ENCODE measurements at regions of chrX and their contacts with region 1.

Region 1: GRCh38 chrX:49058794-49059193 is at the start of gene CCDC120:
- DNase-seq: no peak
- H3K4me3 ChIP-seq: peak within 1 kb of the TSS; percentile 57; the same call in 1 of the 2 replicates
- H3K27ac ChIP-seq: peak within 1 kb of the TSS; percentile 47; the same call in 1 of the 2 replicates
- H3K4me1 ChIP-seq: no peaks in the 10 kb centered on the region
- H3K27me3 ChIP-seq: no peaks in the 10 kb centered on the region
- CTCF ChIP-seq: no peak
- total RNA-seq, gene CCDC120: 20.6 and 23.9 TPM in 2 replicates

Region 2: GRCh38 chrX:48737213-48737938 is 321.4 kb before region 1 on chrX:
- CTCF ChIA-PET with region 1: no interaction called
- POLR2A ChIA-PET with region 1: no interaction called
- intact Hi-C with region 1: no loop called
- DNase-seq: peak; percentile 81 to 88
- H3K4me3 ChIP-seq: peak overlapping the region; percentile 58; the same call in 1 of the 2 replicates
- H3K27ac ChIP-seq: peak overlapping the region; percentile 81
- H3K4me1 ChIP-seq: no peaks in the 10 kb centered on the region
- H3K27me3 ChIP-seq: no peaks in the 10 kb centered on the region
- CTCF ChIP-seq: no peak

Region 3: DNA sequence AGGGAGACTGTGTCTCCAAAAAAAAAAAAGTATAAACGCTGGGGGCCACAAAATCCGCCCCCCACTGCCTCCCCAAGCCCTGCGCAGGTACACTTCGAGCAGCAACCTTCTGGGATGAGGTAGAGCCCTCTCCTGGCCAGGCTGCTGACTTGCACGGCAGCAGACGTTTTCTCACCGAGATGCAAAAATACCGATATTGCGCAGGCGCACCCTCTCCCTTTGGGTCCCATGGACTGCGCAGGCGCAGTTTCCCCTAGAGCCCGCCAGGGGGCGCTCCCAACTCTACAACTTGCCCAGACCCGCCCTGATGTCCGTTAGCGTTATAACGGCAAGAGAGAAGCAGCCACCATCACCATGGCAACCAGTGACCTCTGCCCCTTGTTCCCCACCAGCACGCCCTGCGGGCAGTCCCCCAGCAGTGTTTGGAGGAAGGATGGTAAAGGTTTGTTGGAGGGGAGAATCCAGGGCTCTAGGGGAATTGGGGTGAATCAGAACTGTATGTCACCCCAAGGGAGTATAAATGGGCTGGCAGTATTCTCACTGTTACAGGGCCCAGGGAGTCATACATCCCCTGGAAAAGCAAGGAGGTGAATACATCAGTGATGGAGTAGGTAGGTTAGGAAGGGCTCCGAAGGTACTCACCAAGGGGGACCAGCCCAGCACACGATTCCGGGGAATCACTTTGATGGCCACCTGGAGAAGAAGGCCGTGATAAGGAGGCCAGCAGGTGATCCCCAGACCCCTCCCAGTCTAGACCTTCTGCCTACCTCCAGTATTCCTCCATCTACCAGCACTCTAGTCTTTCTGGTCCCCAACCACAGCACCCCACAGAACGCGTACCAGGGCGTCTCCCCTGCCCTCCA is 141.4 kb before region 1 on chrX:
- CTCF ChIA-PET with region 1: no interaction called
- POLR2A ChIA-PET with region 1: no interaction called
- intact Hi-C with region 1: loop called (anchors 5 kb)
- DNase-seq: peak; percentile 70 to 75
- H3K4me3 ChIP-seq: no peak overlapping the region
- H3K27ac ChIP-seq: no peak overlapping the region
- H3K4me1 ChIP-seq: no peaks in the 10 kb centered on the region
- H3K27me3 ChIP-seq: no peaks in the 10 kb centered on the region
- CTCF ChIP-seq: peak; percentile 80

Region 4: DNA sequence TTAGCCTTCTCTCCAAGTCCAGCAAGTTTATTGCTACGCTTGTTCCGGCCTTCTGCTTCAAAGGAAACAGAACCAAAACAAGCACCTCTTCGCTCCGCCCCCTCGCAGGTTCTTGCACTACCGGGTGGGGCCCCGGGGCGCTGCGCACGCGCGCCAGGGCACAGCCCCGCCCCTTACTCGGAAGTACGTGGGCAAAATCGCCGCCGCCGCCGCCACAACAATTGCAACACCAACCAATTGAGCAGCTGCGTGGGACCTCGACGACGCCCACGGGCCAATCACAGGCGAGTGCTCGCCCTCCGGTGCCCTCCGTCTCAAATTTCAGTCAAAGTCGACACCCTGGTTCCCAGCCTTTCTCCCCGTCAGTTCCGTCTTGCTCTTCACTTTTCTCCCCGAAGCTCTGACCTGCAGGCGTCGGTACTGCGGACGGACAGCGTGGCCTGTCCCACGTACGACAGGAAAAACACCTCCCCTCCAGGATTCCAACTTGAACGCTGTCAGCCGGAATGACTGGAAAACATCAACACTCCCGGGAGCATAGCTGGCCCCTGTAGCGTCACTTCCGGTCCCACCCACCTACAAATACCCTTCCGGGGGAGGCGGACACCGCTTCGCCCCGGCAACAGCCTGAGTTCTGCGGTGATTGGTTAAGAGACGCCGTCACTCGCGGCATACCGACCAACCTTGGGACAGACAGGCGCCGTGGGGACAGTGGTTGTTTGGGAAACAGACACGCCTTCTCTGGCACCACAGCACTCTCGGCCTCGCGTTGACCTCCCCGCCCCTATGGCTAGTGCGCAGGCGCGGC is 100.8 kb before region 1 on chrX:
- CTCF ChIA-PET with region 1: no interaction called
- POLR2A ChIA-PET with region 1: no interaction called
- intact Hi-C with region 1: loop called (anchors 5 kb)
- DNase-seq: peak; percentile 83 to 87
- H3K4me3 ChIP-seq: peak overlapping the region; percentile 55; the same call in 1 of the 2 replicates
- H3K27ac ChIP-seq: peak overlapping the region; percentile 77
- H3K4me1 ChIP-seq: no peaks in the 10 kb centered on the region; the same call in 1 of the 2 replicates
- H3K27me3 ChIP-seq: no peaks in the 10 kb centered on the region
- CTCF ChIP-seq: no peak

Measured in PC-9 (cell line).